HCT116 (cell line): ENCODE measurements at regions of chr13 and their contacts with region 1.

Region 1: GRCh38 chr13:51832471-51833152 is 12.4 kb downstream of the TMEM272 start:
- DNase-seq: no peak
- ATAC-seq: peak; percentile 89
- H3K4me3 ChIP-seq: no peak overlapping the region
- H3K27ac ChIP-seq: no peak overlapping the region
- H3K4me1 ChIP-seq: no peaks in the 10 kb centered on the region
- H3K27me3 ChIP-seq: peaks cover 9% of the 10 kb centered on the region; the same call in 1 of the 2 replicates
- CTCF ChIP-seq: peak; percentile 23 to 29 (median 27); a peak in 5 of 6 replicates
- POLR2A ChIP-seq: no peak
- RAD21 ChIP-seq: peak; percentile 46

Region 2: DNA sequence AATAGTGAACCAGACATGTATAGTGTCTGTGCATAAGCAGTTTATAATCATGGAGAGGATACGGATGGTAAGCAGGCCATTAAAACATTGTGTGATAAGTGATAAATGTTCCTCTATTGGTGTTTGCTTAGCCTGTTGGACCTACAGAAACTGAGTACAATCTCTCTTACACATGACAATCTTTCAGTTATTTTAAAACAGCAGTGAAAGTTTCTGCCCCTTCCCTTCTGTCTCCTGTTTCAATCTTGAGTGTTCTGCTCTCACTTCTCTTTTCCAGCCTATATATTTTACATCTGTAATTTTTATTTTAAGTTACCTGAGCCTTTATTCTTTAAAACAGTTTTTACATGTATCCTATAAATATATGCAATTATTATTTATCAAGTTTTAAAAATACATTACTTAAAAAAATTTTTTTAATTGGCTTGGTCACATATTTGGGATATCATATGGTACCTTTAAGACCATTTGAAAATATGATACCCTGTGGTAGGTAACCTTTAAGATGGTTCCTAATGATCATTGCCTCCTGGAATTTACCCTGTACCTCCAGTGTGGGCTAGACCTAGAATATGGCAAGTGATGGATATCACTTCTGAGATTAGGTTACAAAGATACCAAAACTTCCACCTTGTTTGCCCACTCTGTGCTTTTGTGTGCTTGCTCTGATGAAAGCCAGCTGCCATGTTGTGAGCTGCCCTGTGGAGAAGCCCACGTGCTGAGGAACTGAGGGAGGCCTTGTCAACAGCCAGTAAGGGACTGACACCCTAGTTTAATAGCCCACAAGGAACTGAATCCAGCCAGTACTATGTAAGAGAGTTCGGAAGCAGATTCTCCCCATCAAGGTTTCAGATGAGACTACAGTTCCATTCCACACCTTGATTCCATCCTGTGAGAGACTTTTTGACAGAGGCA is 128.0 kb before region 1 on chr13:
- CTCF ChIA-PET with region 1: no interaction called
- POLR2A ChIA-PET with region 1: no interaction called
- RAD21 ChIA-PET with region 1: no interaction called
- intact Hi-C with region 1: no loop called
- DNase-seq: no peak
- ATAC-seq: no peak
- H3K4me3 ChIP-seq: no peak overlapping the region
- H3K27ac ChIP-seq: no peak overlapping the region
- H3K4me1 ChIP-seq: no peaks in the 10 kb centered on the region
- H3K27me3 ChIP-seq: no peaks in the 10 kb centered on the region
- CTCF ChIP-seq: no peak
- POLR2A ChIP-seq: no peak
- RAD21 ChIP-seq: no peak

Region 3: GRCh38 chr13:51814825-51815650 is 17.6 kb before region 1 on chr13:
- CTCF ChIA-PET with region 1: interaction called, 10 read pairs
- POLR2A ChIA-PET with region 1: no interaction called
- RAD21 ChIA-PET with region 1: no interaction called
- intact Hi-C with region 1: no loop called
- DNase-seq: peak; percentile 60
- ATAC-seq: peak; percentile 81
- H3K4me3 ChIP-seq: peak overlapping the region; percentile 15 to 33
- H3K27ac ChIP-seq: no peak overlapping the region
- H3K4me1 ChIP-seq: peaks cover 0 to 31% of the 10 kb centered on the region in 2 experiments; a peak in 3 of 4 replicates
- H3K27me3 ChIP-seq: no peaks in the 10 kb centered on the region; the same call in 1 of the 2 replicates
- CTCF ChIP-seq: peak; percentile 75 to 87 (median 85)
- POLR2A ChIP-seq: no peak
- RAD21 ChIP-seq: peak; percentile 76